ENCODE measurements at regions of chr14 and their contacts with region 1.

Region 1: DNA sequence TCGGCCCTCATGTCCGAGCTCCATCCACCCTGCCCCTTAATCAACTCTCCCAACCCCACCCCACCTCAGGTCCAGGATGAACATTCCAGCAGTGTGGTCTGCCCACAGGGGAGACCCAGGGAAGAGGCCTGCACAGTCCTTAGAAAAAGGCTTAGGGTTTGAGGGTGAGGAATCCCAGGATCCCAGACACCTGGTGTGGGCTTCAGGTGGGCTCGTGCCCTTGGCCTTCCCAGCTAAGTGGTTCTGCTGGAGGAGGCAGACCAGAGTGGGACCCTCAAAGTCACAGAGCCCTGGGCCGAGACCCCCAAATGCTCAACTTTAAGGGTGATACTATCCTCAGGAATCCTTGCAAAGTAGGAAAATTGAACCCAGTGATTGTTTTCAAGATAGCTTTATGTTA is 25.4 kb upstream of the PPP2R5C start:
- H3K4me3 ChIP-seq: no peak overlapping the region
- H3K27ac ChIP-seq: no peak overlapping the region
- H3K4me1 ChIP-seq: no peaks in the 10 kb centered on the region
- CTCF ChIP-seq: no peak

Region 2: DNA sequence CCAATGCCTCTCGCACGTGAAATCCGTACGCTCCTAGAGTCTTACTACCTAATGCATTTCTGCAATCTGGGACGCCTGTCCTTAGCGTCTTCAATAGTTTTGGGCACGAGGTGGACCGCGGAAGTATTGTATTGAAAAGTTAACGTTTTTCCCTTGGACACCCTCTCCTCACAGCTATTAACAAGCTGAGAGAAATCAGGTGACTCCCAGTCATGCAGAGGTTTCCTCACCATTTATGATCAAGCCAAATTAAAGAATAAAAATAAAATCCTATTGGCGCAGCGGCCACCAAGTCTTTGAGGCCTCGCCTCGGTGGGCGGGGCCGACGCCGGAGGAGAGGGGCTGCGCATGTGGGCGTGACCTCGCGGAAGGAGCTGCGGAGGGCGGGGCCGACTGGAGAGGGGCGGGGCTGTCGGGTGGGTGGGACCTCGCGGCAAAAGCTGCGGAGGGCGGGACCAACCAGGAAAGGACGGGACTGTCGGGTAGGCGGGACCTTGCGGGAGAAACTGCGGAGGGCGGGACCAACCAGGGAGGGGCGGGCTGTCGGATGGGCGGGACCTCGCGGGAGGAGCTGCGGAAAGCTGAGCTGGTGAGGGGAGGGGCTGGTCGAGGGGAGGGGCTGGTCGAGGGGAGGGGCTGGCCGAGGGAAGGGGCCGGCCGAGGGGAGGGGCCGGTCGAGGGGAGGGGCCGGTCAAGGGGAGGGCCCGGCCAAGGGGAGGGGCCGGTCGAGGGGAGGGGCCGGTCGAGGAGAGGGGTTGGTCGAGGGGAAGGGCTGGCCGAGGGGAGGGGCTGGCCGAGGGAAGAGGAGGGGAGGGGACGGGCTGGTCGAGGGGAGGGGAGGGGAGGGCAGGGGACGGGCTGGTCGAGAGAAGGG is 24.3 kb after region 1 on chr14:
- CTCF ChIA-PET with region 1: no interaction called
- POLR2A ChIA-PET with region 1: interaction called, 14 read pairs
- H3K4me3 ChIP-seq: peak overlapping the region; percentile 75
- H3K27ac ChIP-seq: no peak overlapping the region
- H3K4me1 ChIP-seq: peaks cover 3% of the 10 kb centered on the region
- CTCF ChIP-seq: no peak

Measured in HEK293 (cell line).